ENCODE measurements at regions of chr11 and their contacts with region 1.

Region 1: GRCh38 chr11:65919146-65920033 is at the start of gene DRAP1:
- DNase-seq: peak; percentile 98 to 99 (median 99)
- ATAC-seq: peak; percentile 93
- H3K4me3 ChIP-seq: peak within 1 kb of the TSS; percentile 98
- H3K27ac ChIP-seq: peak within 1 kb of the TSS; percentile 95
- H3K4me1 ChIP-seq: peaks cover 25 to 61% of the 10 kb centered on the region in 2 experiments
- H3K27me3 ChIP-seq: no peaks in the 10 kb centered on the region
- CTCF ChIP-seq: no peak
- EP300 ChIP-seq: peak; percentile 59
- POLR2A ChIP-seq: peak; percentile 46; the same call in 1 of the 2 replicates
- RAD21 ChIP-seq: peak; percentile 47 to 57
- polyA plus RNA-seq, gene DRAP1: 9.6 to 14.3 TPM

Region 2: GRCh38 chr11:65711785-65712632 is 207.4 kb before region 1 on chr11 and contains the start of gene KAT5:
- CTCF ChIA-PET with region 1: no interaction called
- POLR2A ChIA-PET with region 1: no interaction called
- in situ Hi-C with region 1: no loop called
- intact Hi-C with region 1: no loop called
- DNase-seq: peak; percentile 93 to 99 (median 95)
- ATAC-seq: peak; percentile 93
- H3K4me3 ChIP-seq: peak within 1 kb of the TSS; percentile 59
- H3K27ac ChIP-seq: peak within 1 kb of the TSS; percentile 98
- H3K4me1 ChIP-seq: peaks cover 17 to 28% of the 10 kb centered on the region in 2 experiments
- H3K27me3 ChIP-seq: no peaks in the 10 kb centered on the region
- CTCF ChIP-seq: peak; percentile 97 to 99 (median 98)
- EP300 ChIP-seq: 0 out of 2 replicates have a peak, but pooled peaks have one; percentile 34
- POLR2A ChIP-seq: peak; percentile 93
- RAD21 ChIP-seq: peak; percentile 96 to 97
- polyA plus RNA-seq, gene KAT5: 3.6 to 12.9 TPM

Region 3: DNA sequence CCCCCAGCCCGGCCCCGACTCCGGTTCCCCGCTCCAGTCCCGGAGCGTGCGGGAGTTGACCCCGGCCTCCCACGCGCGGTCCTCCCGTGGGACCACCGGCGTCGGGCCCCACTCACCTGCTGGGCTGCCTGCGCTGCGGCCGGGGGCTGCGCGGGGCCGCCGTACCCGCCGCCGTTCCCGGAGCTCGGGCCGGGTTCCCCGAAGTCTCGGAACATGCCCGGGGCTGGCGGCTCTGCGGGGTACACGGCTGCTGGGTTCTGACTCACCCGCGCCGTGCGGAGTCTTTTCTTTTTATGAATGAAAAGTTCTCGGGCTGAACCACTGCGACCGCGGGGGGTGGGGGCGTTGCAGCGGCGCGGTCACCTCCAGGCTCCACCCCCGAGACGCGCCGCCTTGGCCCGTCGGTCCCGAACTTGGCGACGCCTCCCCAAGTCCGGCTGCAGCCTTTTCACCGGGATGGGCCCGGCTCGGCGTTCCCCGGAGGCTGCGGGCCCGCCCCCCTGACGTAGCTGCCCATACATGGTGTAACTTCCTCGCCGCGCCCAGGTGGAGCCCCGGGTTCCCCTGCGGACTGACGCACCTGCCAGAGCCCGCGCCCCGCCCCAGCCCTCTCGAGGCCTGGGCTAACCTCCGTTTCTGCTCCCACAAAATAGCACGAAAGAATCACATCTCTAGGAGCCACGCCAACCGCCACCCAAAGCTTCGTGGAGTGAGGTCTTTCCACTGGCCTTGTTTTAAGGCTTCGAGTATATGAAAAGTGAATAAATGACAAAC is 19.1 kb before region 1 on chr11 and contains the start of gene FOSL1:
- CTCF ChIA-PET with region 1: no interaction called
- POLR2A ChIA-PET with region 1: interaction called, 14 read pairs
- in situ Hi-C with region 1: no loop called
- intact Hi-C with region 1: no loop called
- DNase-seq: peak; percentile 89 to 97 (median 92)
- ATAC-seq: peak; percentile 90
- H3K4me3 ChIP-seq: peak within 1 kb of the TSS; percentile 89
- H3K27ac ChIP-seq: peak within 1 kb of the TSS; percentile 100
- H3K4me1 ChIP-seq: peaks cover 42 to 70% of the 10 kb centered on the region in 2 experiments
- H3K27me3 ChIP-seq: no peaks in the 10 kb centered on the region
- CTCF ChIP-seq: no peak
- EP300 ChIP-seq: peak; percentile 39; the same call in 1 of the 2 replicates
- POLR2A ChIP-seq: peak; percentile 97
- RAD21 ChIP-seq: 0 out of 4 replicates have a peak, but pooled peaks of 1 of the 2 experiments have one; percentile 7
- polyA plus RNA-seq, gene FOSL1: 3.5 to 4.2 TPM

Region 4: GRCh38 chr11:65906602-65907001 is 12.8 kb before region 1 on chr11:
- CTCF ChIA-PET with region 1: no interaction called
- POLR2A ChIA-PET with region 1: interaction called, 12 read pairs
- in situ Hi-C with region 1: no loop called
- intact Hi-C with region 1: no loop called
- DNase-seq: peak; percentile 37 to 73 (median 56)
- ATAC-seq: peak; percentile 52
- H3K4me3 ChIP-seq: no peak overlapping the region
- H3K27ac ChIP-seq: peak overlapping the region; percentile 53; the same call in 2 of the 3 replicates
- H3K4me1 ChIP-seq: peaks cover 39 to 40% of the 10 kb centered on the region in 2 experiments
- H3K27me3 ChIP-seq: no peaks in the 10 kb centered on the region
- CTCF ChIP-seq: no peak
- EP300 ChIP-seq: peak; percentile 50; the same call in 1 of the 2 replicates
- POLR2A ChIP-seq: no peak
- RAD21 ChIP-seq: no peak

Region 5: DNA sequence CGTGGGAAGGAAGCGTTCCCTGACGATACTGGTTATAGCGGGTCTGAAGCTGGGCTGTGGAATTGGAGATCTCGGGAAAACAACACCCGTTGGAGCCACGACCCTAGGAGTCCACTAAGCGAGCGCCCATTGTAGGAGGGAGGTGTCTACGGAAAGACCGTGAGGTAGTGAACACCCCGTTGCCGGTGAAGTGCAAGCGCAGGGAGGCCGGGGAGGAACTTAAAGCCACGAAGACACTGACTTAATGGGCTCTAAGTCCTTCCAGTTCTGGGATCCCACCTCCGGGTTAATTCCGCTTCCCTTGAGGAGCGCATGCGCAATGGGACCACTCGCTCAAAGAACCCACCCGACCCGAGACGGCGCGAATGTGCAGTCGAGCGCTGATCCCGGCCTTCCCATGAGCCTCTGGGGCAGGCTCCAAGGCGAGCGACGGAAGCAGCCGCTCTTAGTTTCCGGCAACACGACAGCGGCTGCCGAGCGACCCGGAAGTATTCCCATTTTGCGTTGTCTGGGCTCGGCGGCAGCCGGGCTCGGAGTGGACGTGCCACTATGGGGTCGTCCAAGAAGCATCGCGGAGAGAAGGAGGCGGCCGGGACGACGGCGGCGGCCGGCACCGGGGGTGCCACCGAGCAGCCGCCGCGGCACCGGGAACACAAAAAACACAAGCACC is 42.0 kb after region 1 on chr11 and contains the start of gene SART1:
- CTCF ChIA-PET with region 1: no interaction called
- POLR2A ChIA-PET with region 1: interaction called, 5 read pairs
- in situ Hi-C with region 1: no loop called
- intact Hi-C with region 1: loop called (anchors 1 kb)
- DNase-seq: peak; percentile 95 to 99 (median 97)
- ATAC-seq: peak; percentile 97
- H3K4me3 ChIP-seq: peak within 1 kb of the TSS; percentile 100
- H3K27ac ChIP-seq: peak within 1 kb of the TSS; percentile 96
- H3K4me1 ChIP-seq: peaks cover 12 to 39% of the 10 kb centered on the region in 2 experiments; a peak in 4 of 5 replicates
- H3K27me3 ChIP-seq: no peaks in the 10 kb centered on the region
- CTCF ChIP-seq: no peak
- EP300 ChIP-seq: peak; percentile 64; the same call in 1 of the 2 replicates
- POLR2A ChIP-seq: peak; percentile 96
- RAD21 ChIP-seq: no peak; a peak in 2 of 4 replicates
- polyA plus RNA-seq, gene SART1: 4.8 to 7.2 TPM

Measured in K562 (cell line).